WTC11 (cell line): ENCODE measurements at regions of chr1 and their contacts with region 1.

Region 1: DNA sequence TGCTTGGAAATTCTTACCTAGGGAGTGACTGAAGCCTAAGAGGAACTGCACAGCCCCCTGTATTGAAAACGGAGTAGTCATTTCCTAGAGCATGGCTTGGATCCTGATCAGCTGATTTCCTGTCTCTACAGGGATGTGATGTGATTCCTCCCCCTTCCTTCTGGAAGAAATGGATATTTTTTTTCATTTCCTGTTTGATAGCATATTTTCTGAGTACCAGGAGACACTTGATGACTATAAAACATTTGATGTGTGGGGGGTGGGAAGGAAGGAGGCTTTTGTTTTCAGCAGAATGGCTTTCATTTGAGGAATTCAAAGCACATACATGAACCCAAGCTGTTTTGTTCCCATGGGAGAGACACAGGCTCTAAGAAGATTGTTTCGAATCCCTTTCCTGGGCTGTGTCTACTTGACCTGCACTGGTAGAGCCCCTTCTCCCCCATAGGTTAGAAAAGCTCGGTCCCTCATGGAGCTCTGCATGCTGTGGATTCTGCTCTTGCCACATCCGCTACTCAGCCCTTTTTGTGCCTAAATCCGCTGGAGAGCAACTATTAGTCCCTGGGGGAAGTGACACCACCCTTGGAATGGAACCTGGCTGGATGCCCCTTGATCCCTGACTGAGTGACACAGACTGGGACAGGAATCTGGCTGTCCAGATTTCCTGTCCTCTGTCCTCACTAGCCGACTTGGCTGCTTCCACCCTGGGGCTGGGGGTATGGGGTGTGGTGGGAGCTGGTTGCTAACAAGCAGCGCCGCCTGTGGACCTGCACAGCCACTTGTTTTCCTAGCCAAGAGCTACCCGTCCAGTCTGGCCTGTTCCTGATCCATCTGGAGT is 71.8 kb upstream of the MACF1 start:
- DNase-seq: peak; percentile 88
- ATAC-seq: peak; percentile 92
- H3K4me3 Mint-ChIP-seq: peak overlapping the region; percentile 34
- H3K27ac Mint-ChIP-seq: peak overlapping the region; percentile 98
- H3K4me1 Mint-ChIP-seq: peaks cover 67% of the 10 kb centered on the region
- H3K27me3 Mint-ChIP-seq: no peaks in the 10 kb centered on the region
- CTCF ChIP-seq: no peak

Region 2: GRCh38 chr1:39110325-39110851 is 22.3 kb before region 1 on chr1:
- CTCF ChIA-PET with region 1: interaction called, 39 read pairs
- POLR2A ChIA-PET with region 1: interaction called, 9 read pairs
- DNase-seq: no peak
- ATAC-seq: no peak
- H3K4me3 Mint-ChIP-seq: no peak overlapping the region; the same call in 1 of the 2 replicates
- H3K27ac Mint-ChIP-seq: peak overlapping the region; percentile 78
- H3K4me1 Mint-ChIP-seq: peaks cover 27% of the 10 kb centered on the region
- H3K27me3 Mint-ChIP-seq: no peaks in the 10 kb centered on the region
- CTCF ChIP-seq: no peak

Region 3: DNA sequence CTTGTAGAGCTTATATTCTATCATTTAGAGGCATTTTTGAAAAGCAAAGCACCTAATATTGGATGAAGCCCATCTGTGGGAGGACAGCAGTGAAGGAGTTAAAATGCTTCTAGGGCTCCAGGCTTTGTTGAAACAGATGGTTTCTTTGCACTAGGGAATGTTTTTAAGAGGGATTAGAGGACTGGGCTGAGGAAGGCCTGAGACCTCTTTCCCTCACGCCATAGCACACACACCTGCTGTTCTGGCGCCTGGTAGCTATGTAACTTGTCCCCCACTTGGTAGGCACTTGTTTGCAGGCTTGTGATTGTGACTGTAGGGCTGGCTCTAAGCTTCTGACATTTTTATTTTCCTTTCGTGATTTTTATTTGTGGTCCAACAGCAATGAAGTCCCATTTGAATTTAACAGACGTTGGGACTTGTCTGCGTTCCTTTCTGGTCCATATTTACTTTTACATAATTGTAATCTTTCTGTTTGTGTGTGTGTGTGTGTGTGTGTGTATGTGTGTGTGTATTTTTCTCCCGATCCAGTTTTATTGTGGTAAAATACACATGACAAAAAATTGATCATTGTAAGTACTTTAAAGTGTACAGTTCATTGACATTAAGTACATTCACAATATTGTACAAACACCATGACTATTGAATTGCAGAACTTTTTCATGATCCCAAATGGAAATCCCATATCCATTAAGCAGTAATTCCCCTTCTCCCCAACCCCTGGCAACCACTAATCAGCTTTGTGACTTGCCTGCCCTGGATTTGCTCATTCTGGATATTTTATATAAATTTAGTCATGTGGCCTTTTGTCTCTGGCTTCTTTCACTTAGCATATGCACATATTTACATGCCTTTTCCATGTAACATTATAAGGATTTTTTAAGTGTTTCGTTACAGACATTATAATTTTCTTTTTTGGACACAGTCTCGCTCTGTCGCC is 38.3 kb after region 1 on chr1:
- CTCF ChIA-PET with region 1: interaction called, 16 read pairs
- POLR2A ChIA-PET with region 1: interaction called, 4 read pairs
- DNase-seq: peak; percentile 41
- ATAC-seq: peak; percentile 88
- H3K4me3 Mint-ChIP-seq: peak overlapping the region; percentile 39
- H3K27ac Mint-ChIP-seq: peak overlapping the region; percentile 97
- H3K4me1 Mint-ChIP-seq: peaks cover 78% of the 10 kb centered on the region
- H3K27me3 Mint-ChIP-seq: no peaks in the 10 kb centered on the region
- CTCF ChIP-seq: no peak

Region 4: DNA sequence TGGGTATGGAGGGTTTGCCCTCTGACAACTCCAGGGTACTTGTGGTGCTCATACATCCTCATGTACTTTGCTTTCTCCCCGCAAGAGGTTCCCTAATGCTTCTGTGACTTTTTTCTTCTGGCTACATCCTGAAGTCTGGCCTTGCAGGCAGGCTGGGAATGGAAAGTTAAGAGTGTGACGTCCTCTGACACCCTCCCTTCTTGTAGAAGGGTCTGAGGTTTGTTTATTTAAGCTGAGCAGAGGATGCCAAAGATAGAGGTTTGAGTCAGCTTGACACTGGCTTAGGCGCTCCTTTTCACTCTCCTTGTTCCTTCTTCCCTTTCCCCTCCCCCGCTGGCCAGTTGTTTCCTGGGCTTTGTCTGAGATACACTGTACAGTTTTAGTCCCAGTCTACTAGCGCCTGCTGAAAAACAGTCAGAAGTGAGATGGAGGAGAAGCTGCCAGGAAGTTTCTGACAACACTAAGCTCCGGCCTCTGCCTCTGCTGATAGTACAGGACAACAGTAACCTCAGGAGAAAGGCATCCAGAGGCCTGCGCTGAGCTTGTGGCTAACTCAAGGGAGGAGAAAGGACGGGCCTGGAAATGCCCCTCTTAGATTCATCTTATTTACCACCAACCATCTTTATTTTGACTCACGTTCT is 71.8 kb after region 1 on chr1 and contains the start of gene MACF1:
- CTCF ChIA-PET with region 1: interaction called, 13 read pairs
- POLR2A ChIA-PET with region 1: interaction called, 4 read pairs
- DNase-seq: no peak
- ATAC-seq: peak; percentile 83
- H3K4me3 Mint-ChIP-seq: peak within 1 kb of the TSS; percentile 3; the same call in 1 of the 2 replicates
- H3K27ac Mint-ChIP-seq: peak within 1 kb of the TSS; percentile 93
- H3K4me1 Mint-ChIP-seq: peaks cover 31% of the 10 kb centered on the region
- H3K27me3 Mint-ChIP-seq: no peaks in the 10 kb centered on the region
- CTCF ChIP-seq: no peak
- total RNA-seq, gene MACF1: 214 to 327 TPM (median 222 TPM) in 3 replicates

Region 5: DNA sequence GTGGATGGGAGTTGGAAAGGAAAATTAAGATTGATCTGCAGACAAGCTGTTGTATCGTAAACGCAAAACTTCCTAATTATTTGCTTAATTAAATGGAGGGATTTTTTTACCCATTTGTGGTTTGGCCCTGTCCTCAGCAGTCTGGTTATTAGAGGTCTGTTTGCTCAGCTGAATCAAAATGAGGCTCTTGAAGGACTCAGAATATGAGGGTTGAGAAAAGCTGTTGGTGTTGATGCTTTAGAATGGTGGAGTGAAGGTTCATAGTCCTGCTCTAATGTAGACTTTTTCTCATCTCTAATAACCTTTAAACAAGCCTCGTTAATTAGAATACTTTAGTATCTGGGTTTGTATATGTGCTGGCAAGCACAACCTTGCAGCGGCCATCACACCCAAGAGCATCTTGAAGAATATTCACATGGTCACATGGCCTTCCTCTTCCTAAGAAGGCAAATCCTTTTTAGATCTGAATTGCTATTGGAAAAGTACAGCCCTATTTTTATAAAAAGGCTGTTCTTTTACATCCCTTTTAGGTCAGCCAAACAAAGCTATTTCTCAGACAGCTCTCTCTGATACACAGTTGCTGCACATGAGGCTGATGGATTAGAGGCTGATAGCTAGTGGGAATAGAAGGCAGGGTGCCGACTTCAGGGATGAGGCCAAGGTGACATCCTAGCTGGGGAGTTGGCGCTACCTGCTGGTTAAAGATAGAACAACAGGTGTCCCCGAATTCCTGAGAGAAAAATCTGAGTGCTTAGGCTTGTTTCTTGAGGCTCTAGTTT is 125.6 kb after region 1 on chr1:
- CTCF ChIA-PET with region 1: interaction called, 25 read pairs
- POLR2A ChIA-PET with region 1: interaction called, 4 read pairs
- DNase-seq: peak; percentile 82
- ATAC-seq: peak; percentile 90
- H3K4me3 Mint-ChIP-seq: no peak overlapping the region
- H3K27ac Mint-ChIP-seq: peak overlapping the region; percentile 91
- H3K4me1 Mint-ChIP-seq: peaks cover 14% of the 10 kb centered on the region
- H3K27me3 Mint-ChIP-seq: no peaks in the 10 kb centered on the region
- CTCF ChIP-seq: peak; percentile 86